Panc1 (cell line): ENCODE measurements at regions of chr22 and their contacts with region 1.

Region 1: GRCh38 chr22:41555325-41555982 is 5.4 kb upstream of the CSDC2 start:
- DNase-seq: no peak
- ATAC-seq: no peak; the same call in 1 of the 2 replicates
- H3K4me3 ChIP-seq: no peak overlapping the region
- H3K27ac ChIP-seq: peak overlapping the region; percentile 39; the same call in 1 of the 2 replicates
- H3K4me1 ChIP-seq: peaks cover 19% of the 10 kb centered on the region
- H3K27me3 ChIP-seq: no peaks in the 10 kb centered on the region
- CTCF ChIP-seq: no peak

Region 2: DNA sequence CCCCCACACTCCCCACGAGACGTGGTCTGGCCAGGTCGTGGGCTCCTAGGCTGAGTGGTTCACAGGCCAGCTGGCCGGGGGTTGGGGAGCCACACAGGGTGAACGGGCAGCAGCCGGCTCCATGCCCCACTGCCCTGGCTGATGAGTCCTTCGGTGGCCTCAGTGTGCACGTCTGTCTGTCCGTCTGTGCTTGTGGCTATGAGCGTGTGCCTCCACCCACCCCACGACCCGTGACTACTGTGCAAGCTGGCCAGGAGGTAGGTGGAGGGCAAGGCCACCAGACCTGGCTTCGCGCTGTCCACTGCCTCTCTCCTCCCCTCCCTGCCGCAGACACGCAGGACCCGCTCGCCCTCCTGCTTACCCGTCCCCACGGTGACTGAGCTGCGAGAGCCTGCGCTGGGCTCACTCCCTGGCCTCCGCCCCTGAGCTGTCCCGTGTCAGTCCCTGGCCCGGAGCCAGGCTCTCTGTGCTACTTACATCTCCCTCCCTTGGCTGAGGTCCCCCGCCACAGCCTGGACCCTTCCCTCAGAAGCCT is 19.5 kb after region 1 on chr22:
- CTCF ChIA-PET with region 1: interaction called, 7 read pairs
- POLR2A ChIA-PET with region 1: interaction called, 11 read pairs
- in situ Hi-C with region 1: no loop called
- intact Hi-C with region 1: no loop called
- DNase-seq: no peak
- ATAC-seq: no peak
- H3K4me3 ChIP-seq: no peak overlapping the region
- H3K27ac ChIP-seq: no peak overlapping the region
- H3K4me1 ChIP-seq: no peaks in the 10 kb centered on the region; the same call in 1 of the 2 replicates
- H3K27me3 ChIP-seq: no peaks in the 10 kb centered on the region
- CTCF ChIP-seq: no peak

Region 3: GRCh38 chr22:41621099-41621910 is 65.9 kb after region 1 on chr22 and contains the start of gene XRCC6:
- CTCF ChIA-PET with region 1: no interaction called
- POLR2A ChIA-PET with region 1: interaction called, 12 read pairs
- in situ Hi-C with region 1: no loop called
- intact Hi-C with region 1: no loop called
- DNase-seq: peak; percentile 97
- ATAC-seq: peak; percentile 96
- H3K4me3 ChIP-seq: peak within 1 kb of the TSS; percentile 71 to 91
- H3K27ac ChIP-seq: peak within 1 kb of the TSS; percentile 93
- H3K4me1 ChIP-seq: peaks cover 7% of the 10 kb centered on the region; the same call in 1 of the 2 replicates
- H3K27me3 ChIP-seq: no peaks in the 10 kb centered on the region
- CTCF ChIP-seq: no peak
- total RNA-seq, gene XRCC6: 287 TPM